Naive thymus-derived CD4-positive, alpha-beta T cell (primary cell): ENCODE measurements at regions of chr22 and their contacts with region 1.

Region 1: DNA sequence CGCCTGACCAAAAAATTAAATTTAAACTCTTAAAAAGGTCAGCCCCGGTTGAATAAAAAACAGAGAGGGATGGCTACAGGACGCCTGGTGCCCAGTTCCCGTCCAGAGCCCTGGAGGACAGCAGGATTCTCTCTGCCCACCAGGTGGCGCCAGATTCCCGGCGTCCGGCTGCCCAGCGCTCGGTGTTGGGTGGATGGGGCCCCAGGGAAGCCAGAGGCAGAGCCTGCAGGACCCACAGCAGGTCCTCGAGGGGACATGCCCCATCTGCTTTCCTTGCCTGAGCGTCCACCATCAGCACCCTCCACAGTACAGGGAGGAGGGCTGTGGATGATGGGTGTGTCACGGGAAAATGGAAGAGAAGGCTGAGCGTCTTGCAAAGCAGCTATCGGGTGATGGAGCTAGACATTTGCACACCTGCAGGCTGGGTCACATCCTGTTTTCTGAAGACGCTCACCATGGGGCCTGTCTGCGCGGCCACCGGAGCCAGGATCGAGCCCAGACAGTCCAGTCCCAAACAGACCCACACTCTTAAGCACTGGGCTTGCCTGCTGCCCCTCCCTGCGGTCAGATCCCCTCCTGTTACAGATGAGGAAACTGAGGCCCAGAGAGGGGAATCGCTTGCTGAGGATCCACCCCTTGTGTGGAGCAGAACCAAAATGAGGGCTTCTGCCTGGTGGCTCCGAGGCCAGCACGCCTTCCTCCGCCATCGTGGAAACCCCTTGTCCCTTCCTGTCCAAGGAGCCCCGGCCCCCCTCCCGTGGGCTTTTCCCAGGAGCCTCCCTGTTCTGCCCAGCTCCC is 18.5 kb upstream of the CBX7 start:
- DNase-seq: peak; percentile 64 to 94 (median 85)
- ATAC-seq: peak; percentile 85
- H3K4me3 ChIP-seq: peak overlapping the region; percentile 36
- H3K4me3 Mint-ChIP-seq: peak overlapping the region; percentile 58 to 84 (median 76)
- H3K27ac ChIP-seq: peak overlapping the region; percentile 9
- H3K27ac Mint-ChIP-seq: peak overlapping the region; percentile 82 to 98 (median 93)
- H3K4me1 ChIP-seq: peaks cover 39 to 50% of the 10 kb centered on the region in 2 donors
- H3K4me1 Mint-ChIP-seq: peaks cover 21 to 54% (median 48%) of the 10 kb centered on the region in 7 donors
- H3K27me3 ChIP-seq: no peaks in the 10 kb centered on the region
- H3K27me3 Mint-ChIP-seq: peaks cover 0 to 11% (median 0%) of the 10 kb centered on the region in 5 donors

Region 2: DNA sequence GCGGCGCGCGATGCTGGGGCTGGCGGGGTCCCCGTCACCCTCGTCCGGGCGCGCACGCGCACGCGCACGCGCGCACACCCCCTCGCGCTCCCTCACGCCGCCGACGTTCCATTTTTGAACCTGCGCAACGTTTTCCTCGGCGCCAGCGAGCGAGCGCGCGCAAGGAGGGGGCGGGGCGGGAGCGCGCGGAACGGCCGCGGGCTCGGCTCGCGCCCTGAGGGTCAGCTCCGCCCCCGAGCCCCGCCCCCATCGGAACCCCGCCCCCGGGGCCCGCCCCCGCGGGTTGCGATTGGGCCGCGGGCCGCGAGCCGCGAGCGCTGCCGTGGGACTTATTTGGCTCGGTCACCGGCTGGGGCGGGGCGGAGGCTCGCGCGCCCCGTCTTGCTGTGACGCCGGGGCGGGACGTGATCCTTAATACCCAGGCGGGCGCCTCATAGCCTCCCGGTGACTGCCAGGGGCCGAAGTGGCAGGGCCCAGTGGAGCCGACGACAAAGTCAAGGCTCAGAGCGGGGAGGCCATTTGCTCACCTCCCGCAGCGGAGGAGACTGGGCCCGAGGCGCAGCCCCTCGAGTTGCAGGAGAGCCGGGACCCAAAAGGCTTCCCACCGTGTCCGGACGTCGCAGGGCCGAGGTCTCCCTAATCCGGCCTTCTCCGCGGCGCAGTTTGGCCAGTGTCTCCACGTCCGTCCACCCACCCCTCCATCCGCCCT is 18.4 kb before region 1 on chr22 and contains the start of gene CBX7:
- CTCF ChIA-PET with region 1: interaction called, 12 read pairs
- POLR2A ChIA-PET with region 1: interaction called, 13 read pairs
- intact Hi-C with region 1: no loop called
- DNase-seq: peak; percentile 91 to 98 (median 94)
- ATAC-seq: peak; percentile 93
- H3K4me3 ChIP-seq: peak within 1 kb of the TSS; percentile 95
- H3K4me3 Mint-ChIP-seq: peak within 1 kb of the TSS; percentile 83 to 99 (median 92)
- H3K27ac ChIP-seq: peak within 1 kb of the TSS; percentile 89
- H3K27ac Mint-ChIP-seq: peak within 1 kb of the TSS; percentile 87 to 96 (median 91)
- H3K4me1 ChIP-seq: peaks cover 31 to 46% of the 10 kb centered on the region in 2 donors
- H3K4me1 Mint-ChIP-seq: peaks cover 7 to 41% (median 35%) of the 10 kb centered on the region in 7 donors
- H3K27me3 ChIP-seq: no peaks in the 10 kb centered on the region
- H3K27me3 Mint-ChIP-seq: peaks cover 0 to 41% (median 0%) of the 10 kb centered on the region in 5 donors
- total RNA-seq, gene CBX7: 14.2 to 164 (median 76.9) TPM

Region 3: GRCh38 chr22:39236321-39237317 is 65.6 kb after region 1 on chr22:
- CTCF ChIA-PET with region 1: interaction called, 9 read pairs
- POLR2A ChIA-PET with region 1: interaction called, 93 read pairs
- intact Hi-C with region 1: loop called in 1 of 2 experiments (anchors 1 kb)
- DNase-seq: peak in 7 of 9 donors; percentile 27 to 55 (median 49)
- ATAC-seq: peak; percentile 52
- H3K4me3 ChIP-seq: peak overlapping the region; percentile 14
- H3K4me3 Mint-ChIP-seq: peak overlapping the region; percentile 67 to 84 (median 79)
- H3K27ac ChIP-seq: no peak overlapping the region
- H3K27ac Mint-ChIP-seq: peak overlapping the region in 6 of 9 donors; percentile 31 to 89 (median 65)
- H3K4me1 ChIP-seq: peaks cover 54 to 66% of the 10 kb centered on the region in 2 donors
- H3K4me1 Mint-ChIP-seq: peaks cover 43 to 75% (median 67%) of the 10 kb centered on the region in 7 donors
- H3K27me3 ChIP-seq: peaks cover 0 to 8% of the 10 kb centered on the region in 2 donors
- H3K27me3 Mint-ChIP-seq: peaks cover 0 to 80% (median 38%) of the 10 kb centered on the region in 5 donors

Region 4: GRCh38 chr22:39253435-39254070 is 82.5 kb after region 1 on chr22:
- CTCF ChIA-PET with region 1: interaction called, 3 read pairs
- POLR2A ChIA-PET with region 1: interaction called, 3 read pairs
- intact Hi-C with region 1: loop called in 1 of 2 experiments (anchors 5 kb)
- DNase-seq: peak in 1 of 9 donors; percentile 65
- ATAC-seq: peak; percentile 43
- H3K4me3 ChIP-seq: no peak overlapping the region
- H3K4me3 Mint-ChIP-seq: peak overlapping the region in 1 of 10 donors; percentile 40
- H3K27ac ChIP-seq: no peak overlapping the region
- H3K27ac Mint-ChIP-seq: peak overlapping the region in 1 of 9 donors; percentile 42
- H3K4me1 ChIP-seq: peaks cover 12 to 26% of the 10 kb centered on the region in 2 donors
- H3K4me1 Mint-ChIP-seq: peaks cover 0 to 28% (median 10%) of the 10 kb centered on the region in 7 donors
- H3K27me3 ChIP-seq: no peaks in the 10 kb centered on the region
- H3K27me3 Mint-ChIP-seq: peaks cover 0 to 48% (median 22%) of the 10 kb centered on the region in 5 donors

Region 5: DNA sequence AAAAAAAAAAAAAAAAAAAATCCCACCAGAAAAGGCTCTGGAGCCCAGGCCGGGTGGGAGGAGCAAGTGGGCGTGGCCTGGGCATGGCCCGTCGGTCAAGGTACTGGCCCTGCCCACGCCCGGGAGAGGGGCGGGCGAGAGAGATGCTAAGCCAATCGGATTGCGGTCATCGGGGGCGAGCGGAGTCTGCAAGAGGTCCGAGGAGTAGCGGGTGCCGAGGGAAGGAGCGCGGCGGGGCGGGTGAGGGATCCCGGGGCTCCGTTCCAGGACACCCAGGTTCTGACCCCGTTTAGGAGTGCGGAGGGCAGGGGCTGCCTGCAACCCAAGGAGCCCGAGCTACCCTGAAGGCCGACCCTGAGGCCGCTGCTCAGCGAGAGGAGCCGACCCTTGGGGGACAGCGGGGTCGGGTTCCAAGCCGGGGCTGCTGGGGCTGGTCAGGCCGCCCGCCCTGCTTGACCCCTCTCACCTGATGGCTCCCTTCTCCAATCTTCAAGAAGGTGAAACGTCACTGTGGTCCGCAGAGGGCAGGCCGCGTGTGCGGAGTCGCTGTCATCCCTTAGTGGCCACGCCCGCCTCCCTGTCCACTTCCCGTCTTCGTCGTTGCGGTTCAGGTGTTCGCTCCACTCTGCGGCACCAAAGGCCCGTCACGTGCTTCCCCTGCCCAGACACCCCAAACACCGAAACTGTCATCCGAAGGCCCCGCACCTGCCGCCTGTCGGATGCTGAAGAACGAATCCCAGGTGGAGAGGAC is 217.4 kb after region 1 on chr22:
- CTCF ChIA-PET with region 1: interaction called, 4 read pairs
- POLR2A ChIA-PET with region 1: no interaction called
- intact Hi-C with region 1: loop called in 1 of 2 experiments (anchors 2 kb)
- DNase-seq: peak in 8 of 9 donors; percentile 16 to 89 (median 77)
- ATAC-seq: peak; percentile 96
- H3K4me3 ChIP-seq: peak overlapping the region; percentile 56
- H3K4me3 Mint-ChIP-seq: peak overlapping the region; percentile 57 to 98 (median 90)
- H3K27ac ChIP-seq: peak overlapping the region; percentile 87
- H3K27ac Mint-ChIP-seq: peak overlapping the region in 8 of 9 donors; percentile 51 to 99 (median 94)
- H3K4me1 ChIP-seq: peaks cover 0 to 4% of the 10 kb centered on the region in 2 donors
- H3K4me1 Mint-ChIP-seq: peaks cover 6 to 31% (median 18%) of the 10 kb centered on the region in 7 donors
- H3K27me3 ChIP-seq: no peaks in the 10 kb centered on the region
- H3K27me3 Mint-ChIP-seq: peaks cover 0 to 4% (median 0%) of the 10 kb centered on the region in 5 donors